PC-3 (cell line): ENCODE measurements at regions of chr4 and their contacts with region 1.

Region 1: GRCh38 chr4:122666527-122667245 is 45.8 kb upstream of the IL21 start:
- DNase-seq: peak; percentile 82
- ATAC-seq: peak; percentile 89
- H3K4me3 ChIP-seq: no peak overlapping the region
- H3K27ac ChIP-seq: peak overlapping the region; percentile 69
- H3K4me1 ChIP-seq: peaks cover 37% of the 10 kb centered on the region
- H3K27me3 ChIP-seq: no peaks in the 10 kb centered on the region
- CTCF ChIP-seq: no peak

Region 2: GRCh38 chr4:122710434-122711308 is 44.0 kb after region 1 on chr4:
- CTCF ChIA-PET with region 1: no interaction called
- POLR2A ChIA-PET with region 1: no interaction called
- intact Hi-C with region 1: loop called (anchors 2 kb)
- DNase-seq: peak; percentile 67
- ATAC-seq: peak; percentile 95
- H3K4me3 ChIP-seq: 0 out of 2 replicates have a peak overlapping the region, but pooled peaks have one; percentile 15
- H3K27ac ChIP-seq: peak overlapping the region; percentile 47
- H3K4me1 ChIP-seq: peaks cover 13% of the 10 kb centered on the region
- H3K27me3 ChIP-seq: no peaks in the 10 kb centered on the region
- CTCF ChIP-seq: no peak